Psoas muscle (tissue), 8 donors: ENCODE measurements at regions of chr11 and their contacts with region 1.

Region 1: DNA sequence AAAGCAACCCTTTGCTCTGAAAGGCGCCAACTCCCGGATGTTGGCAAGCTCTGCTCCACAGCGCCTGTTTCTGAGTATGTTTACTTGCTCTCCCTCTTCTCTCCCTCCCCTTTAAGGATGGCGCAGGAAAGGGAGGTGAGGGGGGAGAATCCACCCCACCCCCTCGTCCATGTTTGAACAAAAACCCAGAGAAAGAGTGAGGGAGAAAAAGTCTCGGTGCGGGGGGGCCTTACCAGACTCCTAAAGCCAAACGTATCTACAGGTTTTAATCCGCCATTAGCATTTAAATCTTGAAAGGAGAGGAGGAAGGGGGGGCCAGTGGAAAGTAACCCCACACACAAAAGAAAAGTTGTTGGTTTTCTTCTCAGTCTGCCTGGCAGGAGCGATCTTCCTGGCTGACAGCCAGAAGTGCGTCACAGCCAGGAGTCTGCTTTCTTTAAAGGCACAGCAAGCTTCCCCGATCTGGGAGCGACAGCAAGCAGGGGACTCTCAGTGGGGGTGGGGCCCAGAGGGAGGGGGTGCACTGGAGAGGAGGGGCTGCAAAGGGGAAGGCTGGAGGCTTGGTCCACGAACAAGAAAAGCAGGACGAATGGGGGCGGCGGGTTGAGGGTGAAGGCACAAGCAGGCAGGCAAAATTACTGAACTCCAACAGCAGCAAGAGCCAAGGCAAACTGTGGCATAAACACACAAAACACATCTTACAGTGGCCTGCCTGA is 39.5 kb downstream of the NUMA1 start:
- DNase-seq: peak; percentile 95 to 97
- ATAC-seq: peak; percentile 75 to 81 (median 78)
- H3K4me3 ChIP-seq: peak overlapping the region; percentile 86
- H3K27ac ChIP-seq: peak overlapping the region; percentile 94
- H3K4me1 ChIP-seq: peaks cover 44% of the 10 kb centered on the region
- H3K27me3 ChIP-seq: no peaks in the 10 kb centered on the region
- CTCF ChIP-seq: no peak

Region 2: DNA sequence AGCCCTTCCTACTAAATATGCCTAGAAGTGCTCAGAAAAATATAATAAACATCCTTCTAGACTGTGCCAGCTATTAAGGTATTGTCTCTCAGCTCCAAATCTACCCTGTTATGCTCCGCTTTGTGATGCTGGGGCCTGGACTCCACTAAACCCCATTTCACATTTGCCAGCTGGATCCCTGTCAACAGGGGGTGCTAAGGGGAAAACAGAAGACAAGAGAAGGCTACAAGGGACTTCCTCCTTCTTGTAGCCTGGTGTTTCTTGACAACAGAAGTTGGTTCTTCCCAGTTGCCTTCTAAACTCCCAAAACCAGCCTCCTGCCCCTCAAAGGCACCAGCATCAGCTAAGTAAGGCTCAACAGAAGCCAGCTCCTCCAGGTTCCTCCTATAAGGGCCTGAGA is 34.2 kb after region 1 on chr11:
- intact Hi-C with region 1: loop called (anchors 2 to 5 kb)
- DNase-seq: no peak
- ATAC-seq: no peak
- H3K4me3 ChIP-seq: no peak overlapping the region
- H3K27ac ChIP-seq: no peak overlapping the region
- H3K4me1 ChIP-seq: peaks cover 34% of the 10 kb centered on the region
- H3K27me3 ChIP-seq: no peaks in the 10 kb centered on the region
- CTCF ChIP-seq: no peak

Region 3: DNA sequence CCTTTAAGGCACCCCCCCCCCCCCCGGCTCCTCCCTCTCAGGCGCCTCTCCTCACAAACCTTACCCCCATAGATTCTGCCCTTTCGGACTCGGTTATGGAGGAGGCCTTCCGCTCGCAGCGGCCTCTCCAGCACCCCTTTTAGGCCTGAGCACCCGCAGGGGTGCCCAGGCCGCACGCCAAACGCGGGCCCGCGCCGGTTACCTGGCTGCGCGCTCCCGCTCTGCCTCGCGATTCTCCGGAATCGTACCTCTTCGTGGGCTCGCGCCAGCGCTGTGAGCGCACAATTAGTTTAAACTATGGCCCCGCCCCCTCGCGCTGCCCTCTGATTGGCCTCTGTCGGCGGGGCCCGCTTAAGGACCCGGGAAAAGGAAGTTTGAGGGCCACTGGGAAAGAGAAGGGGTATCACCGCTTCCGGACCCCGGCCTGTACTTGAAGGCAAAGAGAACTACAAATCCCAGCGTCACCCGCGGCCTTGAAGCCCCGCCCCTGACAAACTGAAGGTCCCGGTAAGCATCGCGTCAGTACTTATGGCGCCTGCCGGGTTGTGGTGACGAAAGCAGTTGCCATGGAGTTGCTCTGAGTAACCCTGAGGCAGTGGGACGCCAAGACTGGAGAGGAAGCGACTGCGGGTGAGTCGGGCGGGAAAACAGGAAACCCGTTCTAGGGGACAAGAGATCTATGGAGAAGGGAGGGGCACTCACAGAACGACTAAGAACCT is 39.5 kb after region 1 on chr11 and contains the starts of genes LRRC51 and NUMA1:
- intact Hi-C with region 1: loop called (anchors 2 to 5 kb)
- DNase-seq: peak; percentile 99
- ATAC-seq: peak; percentile 95 to 98 (median 97)
- H3K4me3 ChIP-seq: peak within 1 kb of the TSS; percentile 94
- H3K27ac ChIP-seq: peak within 1 kb of the TSS; percentile 91
- H3K4me1 ChIP-seq: peaks cover 22% of the 10 kb centered on the region
- H3K27me3 ChIP-seq: no peaks in the 10 kb centered on the region
- CTCF ChIP-seq: no peak
- total RNA-seq, gene LRRC51: 4.9 to 5.9 (median 5.4) TPM
- total RNA-seq, gene NUMA1: 100.0 to 130 (median 111) TPM

Region 4: GRCh38 chr11:72119198-72119597 is 78.3 kb after region 1 on chr11:
- intact Hi-C with region 1: no loop called
- DNase-seq: no peak
- ATAC-seq: no peak
- H3K4me3 ChIP-seq: no peak overlapping the region
- H3K27ac ChIP-seq: no peak overlapping the region
- H3K4me1 ChIP-seq: no peaks in the 10 kb centered on the region
- H3K27me3 ChIP-seq: peaks cover 0 to 3% (median 0%) of the 10 kb centered on the region in 3 donors
- CTCF ChIP-seq: no peak